ENCODE measurements at regions of chr2 and their contacts with region 1.

Region 1: DNA sequence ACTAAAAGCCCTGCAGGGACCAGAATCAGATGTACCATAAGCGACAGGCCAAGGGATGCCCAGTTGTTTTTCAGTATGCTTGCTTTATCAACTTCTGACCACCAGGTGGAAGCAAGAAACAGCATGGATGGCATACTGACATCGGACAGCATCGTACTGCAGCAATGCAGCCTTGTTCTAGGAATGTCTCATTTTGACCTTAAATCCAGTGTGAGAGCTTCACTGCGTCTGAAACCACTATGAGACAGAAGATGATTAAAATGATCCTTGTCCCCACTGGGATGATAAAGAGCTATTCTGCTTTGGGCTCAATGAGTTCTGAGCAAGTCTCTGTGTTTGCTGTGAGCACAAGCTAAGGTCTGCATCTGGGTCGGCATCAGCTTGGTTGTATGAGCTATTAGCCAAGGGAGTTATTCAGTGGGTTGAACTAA is 54.3 kb downstream of the CDK15 start:
- DNase-seq: no peak
- ATAC-seq: peak; percentile 95

Region 2: GRCh38 chr2:201406077-201406662 is 454.5 kb before region 1 on chr2:
- intact Hi-C with region 1: no loop called
- DNase-seq: no peak
- ATAC-seq: peak; percentile 60

Region 3: GRCh38 chr2:202033321-202034248 is 172.9 kb after region 1 on chr2 and contains the start of gene FZD7:
- intact Hi-C with region 1: loop called (anchors 5 kb)
- DNase-seq: peak; percentile 95
- ATAC-seq: peak; percentile 90
- total RNA-seq, gene FZD7: 25.3 TPM

Region 4: GRCh38 chr2:202178342-202178958 is 317.8 kb after region 1 on chr2:
- intact Hi-C with region 1: loop called (anchors 5 kb)
- DNase-seq: no peak
- ATAC-seq: peak; percentile 86